ENCODE measurements at regions of chr1 and their contacts with region 1.

Region 1: DNA sequence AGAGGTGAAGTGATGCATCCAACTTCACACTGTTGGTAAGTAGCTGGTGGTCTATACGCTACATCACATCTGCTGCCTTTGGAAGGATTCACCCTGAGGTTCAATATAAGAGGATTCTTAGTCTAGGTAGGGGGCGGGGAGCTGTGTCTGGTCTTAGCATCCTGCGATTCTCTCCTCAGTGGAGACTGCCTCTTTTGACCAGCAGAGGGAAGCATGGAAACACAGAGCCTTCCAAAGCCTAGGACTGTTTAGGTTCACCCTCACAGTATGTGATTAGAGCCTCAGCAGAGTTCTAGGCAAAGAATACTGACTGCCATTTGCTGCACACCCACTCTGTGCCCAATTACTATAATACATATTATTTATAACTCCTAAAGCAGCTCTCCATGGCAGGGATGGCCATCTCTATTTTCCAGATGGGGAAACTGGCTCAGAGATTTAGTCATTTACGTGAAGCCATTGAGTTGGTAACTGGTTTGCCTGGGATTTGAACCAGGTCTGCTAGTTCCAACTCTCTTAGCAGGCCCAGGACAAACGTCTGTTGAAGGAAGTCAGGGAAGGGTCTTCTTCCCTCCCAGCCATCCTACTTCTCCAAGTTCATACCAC is 28.9 kb upstream of the EFCAB14 start:
- DNase-seq: no peak
- ATAC-seq: peak; percentile 73

Region 2: GRCh38 chr1:46991083-46991923 is 243.5 kb after region 1 on chr1:
- intact Hi-C with region 1: loop called (anchors 5 kb)
- DNase-seq: no peak
- ATAC-seq: no peak

Measured in left ventricle myocardium superior (tissue), 1 donor.